CD8-positive, alpha-beta T cell (primary cell): ENCODE measurements at regions of chr3 and their contacts with region 1.

Region 1: DNA sequence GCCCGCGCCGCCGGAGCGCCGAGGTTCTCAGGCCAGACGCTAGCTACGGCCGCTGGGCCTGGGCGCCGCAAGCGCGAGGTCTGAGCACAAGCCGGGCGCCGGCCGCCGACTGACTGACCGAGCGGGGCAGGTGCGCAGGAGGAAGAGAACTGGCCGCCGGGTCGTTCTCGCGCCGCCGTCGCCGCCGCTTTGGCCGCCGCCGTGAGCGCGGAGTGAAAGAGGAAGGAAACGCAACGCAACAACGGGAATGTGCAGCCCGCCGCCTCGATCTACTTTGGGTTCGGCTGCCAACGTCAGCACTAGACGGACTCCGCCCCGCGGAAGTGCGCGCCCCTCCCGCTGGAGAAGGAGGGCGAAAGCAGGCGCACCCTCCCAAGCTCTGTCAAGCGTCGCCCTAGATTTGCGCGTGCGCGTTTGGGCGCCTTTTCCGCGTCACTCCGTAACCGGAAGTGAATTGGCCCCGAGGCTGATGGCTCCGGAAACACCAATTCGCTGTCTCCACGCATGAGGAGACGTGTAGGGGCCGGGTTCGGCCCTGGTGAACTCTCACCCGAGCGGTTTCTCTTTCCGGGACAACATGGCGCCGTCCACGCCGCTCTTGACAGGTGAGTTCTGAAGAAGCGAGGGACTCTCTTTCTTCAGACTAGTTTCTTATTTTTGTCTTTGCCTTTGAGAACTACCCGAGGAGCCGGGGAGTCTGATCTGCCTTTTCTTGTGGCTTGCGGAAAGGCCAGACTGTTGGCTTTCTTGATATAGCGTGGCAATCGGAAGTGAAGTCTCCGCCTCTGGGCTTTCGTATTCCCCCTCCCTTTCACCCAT is at the starts of genes EIF2A and SERP1:
- DNase-seq: peak; percentile 99 to 100 (median 99)
- ATAC-seq: peak; percentile 88
- H3K4me3 ChIP-seq: peak within 1 kb of the TSS; percentile 61 to 84
- H3K4me3 Mint-ChIP-seq: peak within 1 kb of the TSS; percentile 97
- H3K27ac ChIP-seq: peak within 1 kb of the TSS; percentile 91 to 98
- H3K27ac Mint-ChIP-seq: peak within 1 kb of the TSS; percentile 99
- H3K4me1 ChIP-seq: peaks cover 36% of the 10 kb centered on the region
- H3K4me1 Mint-ChIP-seq: peaks cover 74% of the 10 kb centered on the region
- H3K27me3 ChIP-seq: no peaks in the 10 kb centered on the region
- H3K27me3 Mint-ChIP-seq: no peaks in the 10 kb centered on the region
- CTCF ChIP-seq: no peak
- total RNA-seq, gene EIF2A: 156 to 162 TPM
- total RNA-seq, gene SERP1: 143 to 151 TPM

Region 2: DNA sequence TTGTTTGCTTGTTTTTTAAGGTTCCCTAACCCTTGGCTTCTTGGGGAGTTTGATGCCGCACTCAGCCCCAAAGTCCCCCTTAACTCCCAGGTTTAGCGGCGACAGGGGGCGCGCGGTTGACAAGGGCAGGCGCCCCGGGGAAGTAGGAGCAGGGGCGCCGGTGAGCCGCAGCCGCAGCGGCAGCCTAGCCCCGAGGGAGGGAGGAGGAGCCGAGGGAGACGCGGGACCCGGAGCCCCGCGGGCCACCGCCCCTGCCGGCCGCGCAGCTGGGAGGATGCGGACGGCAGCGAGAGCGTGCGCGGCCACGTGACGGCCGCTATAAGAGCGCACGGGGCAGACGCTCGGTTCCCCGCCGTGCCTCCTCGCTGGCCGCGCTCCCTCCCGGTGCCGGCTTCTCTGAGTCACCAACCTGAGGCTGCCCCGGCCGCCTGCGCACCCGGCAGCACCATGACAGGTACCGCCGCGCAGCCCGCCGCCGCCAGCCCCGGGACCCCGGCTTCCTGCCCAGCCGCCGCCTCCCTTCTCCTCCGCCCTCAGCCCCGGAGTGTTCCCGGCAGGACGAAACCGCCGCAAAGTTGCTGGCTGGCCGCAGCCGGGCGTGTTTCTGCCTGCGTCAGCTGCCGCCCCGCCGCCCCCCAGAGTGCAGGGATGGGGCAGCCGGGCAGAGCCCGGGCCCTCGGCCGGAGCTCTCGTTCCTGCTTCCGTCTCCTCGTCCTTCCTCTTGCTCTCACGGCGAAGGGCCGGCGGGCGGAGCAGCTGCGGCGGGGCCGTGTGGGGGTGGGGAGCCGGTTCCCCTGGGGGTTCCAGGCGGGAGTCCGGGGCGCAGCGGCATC is 1555.0 kb before region 1 on chr3 and contains the start of gene GYG1:
- CTCF ChIA-PET with region 1: no interaction called
- POLR2A ChIA-PET with region 1: no interaction called
- intact Hi-C with region 1: loop called in 1 of 2 experiments (anchors 2 kb)
- DNase-seq: peak; percentile 59 to 94 (median 79)
- ATAC-seq: peak; percentile 81
- H3K4me3 ChIP-seq: peak within 1 kb of the TSS; percentile 46 to 66
- H3K4me3 Mint-ChIP-seq: peak within 1 kb of the TSS; percentile 80
- H3K27ac ChIP-seq: peak within 1 kb of the TSS; percentile 69 to 79
- H3K27ac Mint-ChIP-seq: peak within 1 kb of the TSS; percentile 84
- H3K4me1 ChIP-seq: peaks cover 18% of the 10 kb centered on the region
- H3K4me1 Mint-ChIP-seq: peaks cover 35% of the 10 kb centered on the region
- H3K27me3 ChIP-seq: no peaks in the 10 kb centered on the region
- H3K27me3 Mint-ChIP-seq: no peaks in the 10 kb centered on the region
- CTCF ChIP-seq: peak; percentile 45
- total RNA-seq, gene GYG1: 29.4 to 35.2 TPM

Region 3: DNA sequence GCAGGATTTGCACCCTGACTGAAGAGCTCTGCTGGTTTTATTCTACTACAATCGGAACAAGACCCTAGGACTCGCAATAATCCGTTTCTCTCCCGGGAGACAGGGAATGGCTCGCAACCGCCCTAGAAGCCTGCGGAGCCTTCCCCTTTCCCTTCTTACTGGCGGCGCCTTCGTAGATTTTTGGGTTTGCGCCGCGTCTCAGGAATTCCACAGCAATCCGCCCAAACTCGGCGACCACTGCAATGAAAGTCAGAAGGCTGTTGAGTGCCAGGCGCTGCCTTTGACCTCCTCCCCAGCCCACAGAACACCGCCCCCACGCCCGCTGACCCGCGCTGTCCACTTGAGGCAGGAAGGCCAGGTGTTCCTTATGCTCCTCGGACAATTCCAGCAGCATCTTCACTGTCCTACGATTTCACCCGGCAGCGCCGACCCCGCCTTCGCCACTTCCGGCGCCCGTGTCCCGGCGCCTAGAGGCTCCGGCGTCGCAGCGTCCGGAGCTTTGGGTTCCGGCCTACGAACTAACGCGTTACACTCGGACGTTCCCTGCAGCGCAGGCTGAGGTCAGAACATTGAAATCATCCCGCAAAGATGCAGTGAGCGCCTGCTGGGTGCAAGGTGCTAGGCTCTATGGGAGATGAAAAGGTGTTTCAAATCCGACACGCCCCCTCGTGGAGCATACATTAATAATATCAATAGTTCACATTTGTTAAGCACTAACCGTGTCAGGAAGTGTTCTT is 794.2 kb before region 1 on chr3 and contains the start of gene COMMD2:
- CTCF ChIA-PET with region 1: no interaction called
- POLR2A ChIA-PET with region 1: interaction called, 3 read pairs
- intact Hi-C with region 1: loop called in 1 of 2 experiments (anchors 1 kb)
- DNase-seq: peak; percentile 49 to 88 (median 68)
- ATAC-seq: peak; percentile 89
- H3K4me3 ChIP-seq: peak within 1 kb of the TSS; percentile 80 to 82
- H3K4me3 Mint-ChIP-seq: peak within 1 kb of the TSS; percentile 97
- H3K27ac ChIP-seq: peak within 1 kb of the TSS; percentile 74 to 79
- H3K27ac Mint-ChIP-seq: peak within 1 kb of the TSS; percentile 97
- H3K4me1 ChIP-seq: peaks cover 20% of the 10 kb centered on the region
- H3K4me1 Mint-ChIP-seq: peaks cover 45% of the 10 kb centered on the region
- H3K27me3 ChIP-seq: no peaks in the 10 kb centered on the region
- H3K27me3 Mint-ChIP-seq: peaks cover 2% of the 10 kb centered on the region
- CTCF ChIP-seq: peak; percentile 55
- total RNA-seq, gene COMMD2: 59.1 to 59.6 TPM

Region 4: DNA sequence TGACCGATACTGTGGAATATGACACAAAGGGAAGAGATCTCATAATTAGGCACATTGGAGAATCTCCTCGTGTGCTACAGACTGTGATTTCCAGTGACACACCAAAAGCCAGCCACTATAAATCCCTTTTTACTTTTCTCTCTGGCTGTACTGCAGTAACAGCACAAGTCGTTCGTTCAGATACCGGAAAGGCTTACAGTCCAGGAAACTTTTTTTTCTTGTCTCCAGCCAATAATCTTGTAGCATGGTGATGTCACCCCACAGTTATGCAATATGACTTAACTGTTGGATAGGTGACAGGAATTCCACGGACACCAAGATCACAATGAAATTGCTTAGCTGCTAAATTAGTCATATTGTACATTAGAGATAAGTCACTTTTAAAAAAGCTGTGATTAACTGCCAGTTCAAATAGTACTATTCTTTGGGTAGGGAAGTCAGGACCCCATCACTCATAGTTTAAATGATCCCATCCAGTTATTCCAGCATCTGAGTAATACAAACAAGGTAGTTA is 174.6 kb before region 1 on chr3:
- CTCF ChIA-PET with region 1: no interaction called
- POLR2A ChIA-PET with region 1: no interaction called
- intact Hi-C with region 1: no loop called
- DNase-seq: peak in 1 of 9 experiments; percentile 9
- ATAC-seq: no peak
- H3K4me3 ChIP-seq: no peak overlapping the region
- H3K4me3 Mint-ChIP-seq: no peak overlapping the region
- H3K27ac ChIP-seq: no peak overlapping the region
- H3K27ac Mint-ChIP-seq: no peak overlapping the region
- H3K4me1 ChIP-seq: no peaks in the 10 kb centered on the region
- H3K4me1 Mint-ChIP-seq: no peaks in the 10 kb centered on the region
- H3K27me3 ChIP-seq: no peaks in the 10 kb centered on the region
- H3K27me3 Mint-ChIP-seq: peaks cover 4% of the 10 kb centered on the region
- CTCF ChIP-seq: no peak

Region 5: GRCh38 chr3:150603153-150603979 is 56.9 kb after region 1 on chr3 and contains the start of gene SELENOT:
- CTCF ChIA-PET with region 1: no interaction called
- POLR2A ChIA-PET with region 1: interaction called, 40 read pairs
- intact Hi-C with region 1: loop called (anchors 1 kb)
- DNase-seq: peak; percentile 88 to 98 (median 94)
- ATAC-seq: peak; percentile 81
- H3K4me3 ChIP-seq: peak within 1 kb of the TSS; percentile 79 to 86
- H3K4me3 Mint-ChIP-seq: peak within 1 kb of the TSS; percentile 99
- H3K27ac ChIP-seq: peak within 1 kb of the TSS; percentile 88 to 95
- H3K27ac Mint-ChIP-seq: peak within 1 kb of the TSS; percentile 100
- H3K4me1 ChIP-seq: peaks cover 43% of the 10 kb centered on the region
- H3K4me1 Mint-ChIP-seq: peaks cover 71% of the 10 kb centered on the region
- H3K27me3 ChIP-seq: no peaks in the 10 kb centered on the region
- H3K27me3 Mint-ChIP-seq: no peaks in the 10 kb centered on the region
- CTCF ChIP-seq: no peak
- total RNA-seq, gene SELENOT: 130 to 139 TPM

Region 6: GRCh38 chr3:150830094-150830681 is 283.8 kb after region 1 on chr3:
- CTCF ChIA-PET with region 1: no interaction called
- POLR2A ChIA-PET with region 1: no interaction called
- intact Hi-C with region 1: no loop called
- DNase-seq: peak in 2 of 9 experiments; percentile 21 to 23
- ATAC-seq: peak; percentile 23
- H3K4me3 ChIP-seq: no peak overlapping the region
- H3K4me3 Mint-ChIP-seq: no peak overlapping the region
- H3K27ac ChIP-seq: no peak overlapping the region
- H3K27ac Mint-ChIP-seq: no peak overlapping the region
- H3K4me1 ChIP-seq: no peaks in the 10 kb centered on the region
- H3K4me1 Mint-ChIP-seq: no peaks in the 10 kb centered on the region
- H3K27me3 ChIP-seq: no peaks in the 10 kb centered on the region
- H3K27me3 Mint-ChIP-seq: peaks cover 1% of the 10 kb centered on the region
- CTCF ChIP-seq: no peak

Region 7: DNA sequence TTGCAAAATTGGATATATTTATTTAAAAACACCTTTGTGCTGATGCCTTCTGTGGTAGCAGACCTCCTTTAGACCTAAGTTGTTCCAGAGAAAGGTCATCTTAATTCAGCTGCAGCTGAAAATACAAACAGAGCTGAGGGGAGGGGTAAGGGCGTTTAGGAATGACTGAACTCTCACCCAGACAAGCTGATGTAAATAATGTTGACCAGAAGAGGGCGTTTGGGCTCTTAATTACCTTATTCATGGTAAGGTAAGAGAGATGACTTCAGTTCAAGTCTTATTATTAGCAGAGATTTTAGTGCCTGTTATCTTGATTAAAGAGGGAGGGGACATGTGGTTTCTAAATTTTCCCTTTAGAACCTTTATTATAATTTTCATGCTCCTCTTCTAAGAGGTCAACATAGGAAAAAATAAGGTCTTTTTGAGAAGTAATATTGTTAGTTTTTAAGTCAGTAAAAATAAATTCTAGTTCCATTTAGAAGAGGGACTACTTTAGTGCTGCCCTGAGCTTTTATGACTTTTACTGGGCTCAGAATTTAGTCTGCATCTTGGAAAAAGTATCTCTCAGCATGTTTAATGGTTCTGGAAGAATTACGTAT is 610.3 kb after region 1 on chr3:
- CTCF ChIA-PET with region 1: no interaction called
- POLR2A ChIA-PET with region 1: no interaction called
- intact Hi-C with region 1: no loop called
- DNase-seq: peak in 3 of 9 experiments; percentile 34 to 73 (median 65)
- ATAC-seq: peak; percentile 69
- H3K4me3 ChIP-seq: no peak overlapping the region
- H3K4me3 Mint-ChIP-seq: no peak overlapping the region
- H3K27ac ChIP-seq: no peak overlapping the region
- H3K27ac Mint-ChIP-seq: no peak overlapping the region
- H3K4me1 ChIP-seq: no peaks in the 10 kb centered on the region
- H3K4me1 Mint-ChIP-seq: no peaks in the 10 kb centered on the region
- H3K27me3 ChIP-seq: no peaks in the 10 kb centered on the region
- H3K27me3 Mint-ChIP-seq: peaks cover 5% of the 10 kb centered on the region
- CTCF ChIP-seq: peak; percentile 78

Region 8: GRCh38 chr3:151203051-151203420 is 656.6 kb after region 1 on chr3 and contains the start of gene GPR171:
- CTCF ChIA-PET with region 1: no interaction called
- POLR2A ChIA-PET with region 1: no interaction called
- intact Hi-C with region 1: loop called in 1 of 2 experiments (anchors 10 kb)
- DNase-seq: peak; percentile 46 to 91 (median 68)
- ATAC-seq: peak; percentile 84
- H3K4me3 ChIP-seq: peak within 1 kb of the TSS; percentile 50 to 59
- H3K4me3 Mint-ChIP-seq: peak within 1 kb of the TSS; percentile 76
- H3K27ac ChIP-seq: peak within 1 kb of the TSS; percentile 36 to 72
- H3K27ac Mint-ChIP-seq: peak within 1 kb of the TSS; percentile 91
- H3K4me1 ChIP-seq: peaks cover 67% of the 10 kb centered on the region
- H3K4me1 Mint-ChIP-seq: peaks cover 81% of the 10 kb centered on the region
- H3K27me3 ChIP-seq: no peaks in the 10 kb centered on the region
- H3K27me3 Mint-ChIP-seq: no peaks in the 10 kb centered on the region
- CTCF ChIP-seq: no peak
- total RNA-seq, gene GPR171: 11.5 to 13.4 TPM